Colonic mucosa (tissue), 4 donors: ENCODE measurements at regions of chr5 and their contacts with region 1.

Region 1: GRCh38 chr5:115530426-115530825 is 14.1 kb downstream of the FEM1C start:
- DNase-seq: no peak
- H3K4me3 ChIP-seq: no peak overlapping the region
- H3K27ac ChIP-seq: no peak overlapping the region
- H3K4me1 ChIP-seq: peaks cover 15% of the 10 kb centered on the region
- H3K27me3 ChIP-seq: no peaks in the 10 kb centered on the region
- CTCF ChIP-seq: no peak

Region 2: DNA sequence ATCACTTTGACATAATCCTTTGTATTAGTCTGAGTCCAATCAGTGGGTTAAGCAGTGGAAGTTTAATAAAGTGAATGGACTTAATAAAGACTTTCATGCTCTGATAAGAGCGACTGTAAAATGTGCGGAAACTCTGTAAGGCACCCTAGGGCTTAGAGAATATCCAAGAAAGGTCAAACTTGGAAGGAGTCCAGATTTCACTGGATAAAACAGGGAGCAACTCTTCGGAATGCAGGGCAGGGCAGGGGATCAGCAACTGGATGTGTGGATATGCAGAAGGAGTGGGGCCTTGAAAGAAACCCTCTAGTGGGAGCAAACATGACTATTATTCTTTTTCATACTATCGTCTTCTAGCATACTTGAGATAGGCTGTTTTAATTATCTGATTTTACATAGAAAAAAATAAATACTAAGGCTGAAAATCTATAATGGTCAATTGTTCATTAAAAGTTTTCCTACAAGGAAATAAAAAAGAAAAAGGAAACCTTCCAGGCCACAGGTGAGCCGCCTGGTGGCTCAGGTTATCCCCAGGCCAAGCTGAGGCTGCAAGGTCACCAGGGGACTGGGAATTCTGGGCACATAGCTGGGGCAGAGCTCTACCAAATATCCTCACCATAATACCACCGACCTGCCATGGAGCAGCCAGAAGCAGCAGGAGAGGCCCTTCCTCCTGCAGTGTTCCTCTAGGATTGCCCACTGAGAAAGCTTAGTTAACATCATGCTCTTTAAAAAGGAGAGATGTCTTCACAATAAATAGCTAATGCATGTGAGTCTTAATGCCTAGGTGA is 187.6 kb before region 1 on chr5:
- intact Hi-C with region 1: no loop called
- DNase-seq: no peak
- H3K4me3 ChIP-seq: no peak overlapping the region
- H3K27ac ChIP-seq: no peak overlapping the region
- H3K4me1 ChIP-seq: no peaks in the 10 kb centered on the region
- H3K27me3 ChIP-seq: no peaks in the 10 kb centered on the region
- CTCF ChIP-seq: no peak

Region 3: DNA sequence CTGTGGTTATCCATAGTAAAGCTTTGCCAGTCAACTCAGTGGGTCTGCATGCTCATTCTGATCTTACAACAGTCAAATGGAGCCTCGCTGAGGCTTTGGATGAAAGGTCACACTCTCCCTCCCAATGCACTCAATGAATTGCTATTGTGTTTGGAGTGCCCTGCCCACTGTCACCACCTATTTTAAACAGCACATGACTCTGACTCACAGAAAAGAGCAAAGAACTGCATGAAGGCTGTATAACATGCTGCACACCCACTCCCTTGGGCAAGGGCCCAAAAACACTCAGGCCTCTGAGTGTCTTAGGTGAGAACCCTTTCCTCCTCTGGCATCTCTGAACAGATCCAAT is 115.3 kb before region 1 on chr5:
- intact Hi-C with region 1: loop called (anchors 10 kb)
- DNase-seq: peak; percentile 94
- H3K4me3 ChIP-seq: no peak overlapping the region
- H3K27ac ChIP-seq: peak overlapping the region; percentile 87
- H3K4me1 ChIP-seq: peaks cover 6% of the 10 kb centered on the region
- H3K27me3 ChIP-seq: no peaks in the 10 kb centered on the region
- CTCF ChIP-seq: no peak

Region 4: DNA sequence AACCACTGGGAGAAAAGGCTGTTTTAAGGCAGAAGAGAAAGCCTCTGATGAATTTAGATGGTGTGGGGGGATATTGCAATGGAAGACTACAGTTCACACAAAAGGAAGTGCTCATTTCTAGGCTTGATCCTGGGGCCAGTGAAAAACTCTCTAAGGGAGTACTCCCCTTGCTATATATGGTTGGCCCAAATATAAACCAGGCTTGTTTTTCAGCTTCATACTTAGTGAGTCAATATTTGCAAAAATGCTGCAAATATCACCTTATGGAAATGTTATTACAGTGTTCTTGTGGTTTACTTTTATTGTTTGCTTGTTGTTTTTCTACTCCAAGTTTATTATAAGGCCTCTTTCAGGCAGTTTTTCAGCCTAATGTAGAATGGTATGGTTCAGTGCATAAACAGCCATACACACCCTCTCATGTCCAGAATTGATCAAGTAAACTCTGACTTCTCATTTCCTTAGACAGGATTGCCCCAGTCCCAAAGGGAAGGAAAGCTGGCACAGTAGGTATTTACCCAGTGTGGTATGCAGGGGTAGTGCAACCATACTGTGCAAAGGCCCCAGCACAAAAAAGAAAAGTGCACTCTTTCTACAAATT is 101.0 kb before region 1 on chr5:
- intact Hi-C with region 1: no loop called
- DNase-seq: no peak
- H3K4me3 ChIP-seq: no peak overlapping the region
- H3K27ac ChIP-seq: peak overlapping the region; percentile 4
- H3K4me1 ChIP-seq: no peaks in the 10 kb centered on the region
- H3K27me3 ChIP-seq: no peaks in the 10 kb centered on the region
- CTCF ChIP-seq: no peak